ENCODE measurements at regions of chr1 and their contacts with region 1.

Region 1: DNA sequence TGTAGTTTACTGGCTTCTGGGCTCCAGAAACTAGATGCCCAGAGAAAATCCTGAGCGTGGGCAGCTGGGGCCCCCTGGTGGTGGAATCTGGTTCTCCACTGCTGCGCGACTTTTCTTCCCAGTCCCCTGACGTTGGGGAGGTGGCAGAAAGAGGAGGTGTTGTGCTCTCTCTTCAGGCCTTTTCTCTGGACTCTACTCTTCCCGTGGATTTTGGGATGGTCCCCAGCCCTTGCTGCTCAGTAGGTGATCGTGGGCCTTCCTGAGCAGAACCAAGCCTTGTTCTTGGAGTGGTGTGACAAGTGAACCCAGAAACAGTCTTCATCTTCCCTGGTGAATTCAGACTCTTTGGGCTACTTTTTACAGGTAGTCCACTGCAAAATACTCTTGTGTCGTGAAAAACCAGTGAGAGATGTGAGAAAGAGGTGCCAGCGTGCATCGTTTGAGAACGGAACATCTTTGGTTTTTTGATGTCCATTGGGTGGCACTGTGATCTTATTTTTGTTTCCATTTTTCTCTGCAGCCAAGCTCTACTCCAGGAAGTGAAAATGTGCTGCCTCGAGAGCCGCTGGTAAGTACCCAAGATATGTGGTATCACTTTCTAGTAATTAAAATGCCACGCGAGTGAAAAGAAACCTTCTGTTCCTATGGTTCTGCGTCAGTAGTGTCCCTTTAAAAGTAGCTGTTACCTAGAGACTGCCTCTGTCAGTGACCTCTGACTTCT is 20.2 kb downstream of the PEX14 start:
- DNase-seq: peak; percentile 72
- H3K4me3 Mint-ChIP-seq: peak overlapping the region; percentile 76
- H3K27ac Mint-ChIP-seq: peak overlapping the region; percentile 91
- H3K4me1 Mint-ChIP-seq: peaks cover 41% of the 10 kb centered on the region
- H3K27me3 Mint-ChIP-seq: no peaks in the 10 kb centered on the region

Region 2: GRCh38 chr1:10085061-10085460 is 409.9 kb before region 1 on chr1:
- intact Hi-C with region 1: no loop called
- DNase-seq: no peak
- H3K4me3 Mint-ChIP-seq: no peak overlapping the region
- H3K27ac Mint-ChIP-seq: no peak overlapping the region
- H3K4me1 Mint-ChIP-seq: no peaks in the 10 kb centered on the region
- H3K27me3 Mint-ChIP-seq: no peaks in the 10 kb centered on the region

Region 3: GRCh38 chr1:10398734-10399623 is 95.9 kb before region 1 on chr1 and contains the start of gene PGD:
- intact Hi-C with region 1: loop called (anchors 1 kb)
- DNase-seq: peak; percentile 98
- H3K4me3 Mint-ChIP-seq: peak within 1 kb of the TSS; percentile 92
- H3K27ac Mint-ChIP-seq: peak within 1 kb of the TSS; percentile 77
- H3K4me1 Mint-ChIP-seq: peaks cover 25% of the 10 kb centered on the region
- H3K27me3 Mint-ChIP-seq: no peaks in the 10 kb centered on the region
- total RNA-seq, gene PGD: 131 and 142 TPM in 2 replicates

Region 4: GRCh38 chr1:10472220-10473144 is 22.4 kb before region 1 on chr1 and contains the start of gene DFFA:
- intact Hi-C with region 1: loop called (anchors 1 kb)
- DNase-seq: peak; percentile 90
- H3K4me3 Mint-ChIP-seq: peak within 1 kb of the TSS; percentile 89
- H3K27ac Mint-ChIP-seq: peak within 1 kb of the TSS; percentile 85
- H3K4me1 Mint-ChIP-seq: peaks cover 45% of the 10 kb centered on the region
- H3K27me3 Mint-ChIP-seq: no peaks in the 10 kb centered on the region
- total RNA-seq, gene DFFA: 54.7 and 60.1 TPM in 2 replicates

Region 5: DNA sequence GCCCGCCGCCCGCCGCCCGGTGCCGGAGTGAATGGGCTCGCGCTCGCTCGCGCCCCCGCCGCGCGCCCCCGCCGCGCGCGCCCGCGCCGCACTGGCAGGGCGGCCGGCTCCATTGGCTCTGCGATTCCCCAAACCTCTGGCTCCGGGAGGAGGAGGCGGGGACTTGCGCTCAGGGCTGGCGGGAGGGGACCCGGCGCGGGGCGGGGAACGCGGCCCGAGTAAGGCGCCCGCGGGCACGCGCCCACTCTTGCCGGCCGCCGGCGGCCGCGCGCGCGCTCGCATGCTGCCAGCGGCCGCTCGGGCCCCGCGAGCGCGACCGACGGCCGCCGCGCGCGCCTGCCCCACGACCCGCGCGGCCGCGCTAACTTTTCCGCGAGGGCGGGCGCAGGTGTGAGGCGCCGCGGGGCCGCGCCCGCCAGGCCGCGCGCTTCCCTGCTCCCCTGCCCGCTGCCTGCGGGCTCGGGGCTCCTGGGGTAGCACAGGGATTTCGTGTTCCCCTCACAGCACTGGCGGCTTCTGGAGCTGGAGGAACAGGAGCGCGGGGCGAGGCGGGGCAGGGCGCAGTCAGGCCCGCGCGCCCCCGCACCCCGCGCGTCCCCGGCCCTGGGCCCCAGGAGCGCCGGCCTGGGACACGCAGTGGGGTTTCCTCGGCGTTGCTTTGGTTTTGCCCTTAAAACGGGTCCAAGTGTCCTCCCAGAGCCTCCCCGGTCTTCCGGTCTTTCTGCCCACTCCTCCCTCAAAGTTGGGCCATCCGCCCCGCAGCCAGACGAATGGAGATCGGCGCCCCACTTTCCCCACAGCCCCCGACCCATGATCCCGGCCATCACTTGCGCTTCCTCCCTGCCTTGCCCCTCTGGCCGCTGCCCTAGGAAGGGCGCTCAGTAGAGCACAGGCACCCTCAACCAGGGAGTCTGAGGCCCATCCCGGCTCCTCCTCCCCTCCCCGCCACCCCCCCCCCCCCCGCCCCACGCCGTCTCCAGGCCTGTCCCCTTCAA is 200.0 kb after region 1 on chr1:
- intact Hi-C with region 1: loop called (anchors 5 kb)
- DNase-seq: peak; percentile 74
- H3K4me3 Mint-ChIP-seq: peak overlapping the region; percentile 81
- H3K27ac Mint-ChIP-seq: peak overlapping the region; percentile 81
- H3K4me1 Mint-ChIP-seq: peaks cover 24% of the 10 kb centered on the region
- H3K27me3 Mint-ChIP-seq: peaks cover 23% of the 10 kb centered on the region

Region 6: DNA sequence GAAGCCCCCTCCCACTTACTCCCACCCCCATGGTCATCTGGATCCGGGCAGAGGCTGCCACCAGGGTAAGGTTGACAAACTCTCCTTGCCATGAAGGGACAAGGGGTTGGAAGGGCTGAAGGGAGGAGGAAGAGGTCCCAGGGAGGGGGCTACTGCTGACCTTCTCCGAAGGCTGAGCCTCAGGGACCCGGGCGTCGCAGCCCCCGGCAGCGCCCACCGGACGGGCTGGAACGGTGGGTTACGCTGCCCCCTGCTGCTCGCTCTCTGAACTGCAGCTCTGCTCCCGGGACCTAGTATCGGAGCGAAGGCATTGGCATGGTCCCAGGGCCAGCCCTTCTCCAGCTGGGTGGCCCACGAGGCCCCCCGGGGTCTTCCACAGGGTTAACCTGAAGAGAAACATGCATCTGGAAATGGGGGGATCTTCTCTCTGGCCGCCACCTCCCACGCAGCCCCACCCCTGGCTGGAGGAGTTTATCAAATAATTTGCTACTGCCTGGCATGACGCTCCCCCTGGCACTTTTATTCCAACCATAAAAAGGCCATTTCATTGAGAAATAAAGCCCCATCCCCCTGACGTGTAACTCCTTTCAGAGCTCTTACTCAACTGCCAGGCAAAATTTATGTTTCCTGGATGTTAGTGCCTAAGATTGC is 447.1 kb after region 1 on chr1:
- intact Hi-C with region 1: loop called (anchors 2 kb)
- DNase-seq: peak; percentile 42
- H3K4me3 Mint-ChIP-seq: no peak overlapping the region
- H3K27ac Mint-ChIP-seq: no peak overlapping the region
- H3K4me1 Mint-ChIP-seq: peaks cover 31% of the 10 kb centered on the region
- H3K27me3 Mint-ChIP-seq: peaks cover 56% of the 10 kb centered on the region

Measured in activated T-helper 1 cell treated with anti-CD3 and anti-CD28 coated beads, Interleukin-12 subunit alpha, Interleukin-12 subunit beta, Interleukin-2, Interleukin-4 antibody, amounts not matched to agents 30 ng/mL and 10 ng/mL and 1 ng/mL, durations not matched to agents 14 hours and 24 hours and 36 hours (primary cell).